Breast epithelium (tissue), 4 donors: ENCODE measurements at regions of chr7 and their contacts with region 1.

Region 1: DNA sequence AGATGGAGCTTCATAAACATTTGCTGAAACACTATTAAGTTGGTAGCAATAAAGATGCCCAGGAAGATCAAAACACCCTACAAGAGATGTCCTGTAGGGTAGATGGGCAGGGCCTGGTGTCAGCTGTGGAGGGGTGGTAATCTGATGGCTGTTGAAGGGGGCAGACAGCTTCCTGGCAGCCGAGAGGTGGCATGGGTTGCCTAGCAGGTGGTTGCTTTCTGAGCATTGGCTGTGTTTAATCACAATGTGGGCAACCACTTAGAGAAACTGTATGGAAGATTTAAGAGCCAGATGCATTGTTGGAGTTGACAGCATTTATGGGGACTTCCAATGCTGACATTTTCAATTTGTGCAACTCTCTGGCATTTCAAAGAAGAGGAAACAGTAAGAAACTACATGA is 79.9 kb upstream of the SLC26A5 start:
- DNase-seq: no peak
- H3K4me3 ChIP-seq: no peak overlapping the region
- H3K27ac ChIP-seq: no peak overlapping the region
- H3K4me1 ChIP-seq: no peaks in the 10 kb centered on the region
- H3K27me3 ChIP-seq: no peaks in the 10 kb centered on the region
- CTCF ChIP-seq: no peak
- POLR2A ChIP-seq: no peak

Region 2: DNA sequence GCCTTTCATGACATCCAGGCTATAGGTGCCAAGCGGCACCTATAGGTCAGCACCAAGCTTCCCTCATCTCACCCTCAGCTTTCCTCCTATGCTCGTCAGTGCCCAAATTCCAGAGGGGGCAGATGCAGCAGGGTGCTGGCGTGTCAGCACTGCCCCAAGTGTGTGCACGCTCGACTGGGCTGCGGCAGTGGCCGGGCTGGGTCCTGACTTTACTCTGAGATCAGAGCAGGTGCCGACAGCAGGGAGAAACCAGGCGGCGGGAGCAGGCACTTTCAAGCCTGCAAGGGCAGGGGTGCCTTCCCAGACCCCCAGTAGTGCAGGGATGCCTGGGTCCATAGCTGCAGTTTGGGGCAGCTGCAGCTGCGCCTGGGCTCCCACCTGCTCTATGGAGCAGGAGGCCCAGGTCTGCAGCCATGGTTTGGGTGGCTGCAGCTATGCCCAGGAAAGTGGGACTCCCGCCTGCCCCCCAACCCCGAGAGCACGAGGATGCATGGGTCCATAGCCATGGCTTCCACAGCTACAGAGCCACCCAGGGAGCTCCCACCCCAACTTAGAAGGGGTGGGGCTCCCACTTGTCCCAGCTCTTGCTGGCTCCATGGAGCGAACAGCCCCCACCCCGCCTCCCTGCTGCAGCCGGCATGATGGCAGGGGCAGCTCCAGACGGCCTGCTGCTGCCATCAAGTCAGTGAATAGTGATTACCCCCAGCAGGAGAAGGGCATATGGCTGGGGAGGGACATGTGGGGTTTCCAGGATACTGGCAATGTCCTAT is 1288.9 kb after region 1 on chr7:
- intact Hi-C with region 1: loop called (anchors 5 kb)
- DNase-seq: no peak
- H3K4me3 ChIP-seq: no peak overlapping the region
- H3K27ac ChIP-seq: no peak overlapping the region
- H3K4me1 ChIP-seq: no peaks in the 10 kb centered on the region
- H3K27me3 ChIP-seq: peaks cover 0 to 5% of the 10 kb centered on the region in 2 donors
- CTCF ChIP-seq: no peak
- POLR2A ChIP-seq: no peak

Region 3: DNA sequence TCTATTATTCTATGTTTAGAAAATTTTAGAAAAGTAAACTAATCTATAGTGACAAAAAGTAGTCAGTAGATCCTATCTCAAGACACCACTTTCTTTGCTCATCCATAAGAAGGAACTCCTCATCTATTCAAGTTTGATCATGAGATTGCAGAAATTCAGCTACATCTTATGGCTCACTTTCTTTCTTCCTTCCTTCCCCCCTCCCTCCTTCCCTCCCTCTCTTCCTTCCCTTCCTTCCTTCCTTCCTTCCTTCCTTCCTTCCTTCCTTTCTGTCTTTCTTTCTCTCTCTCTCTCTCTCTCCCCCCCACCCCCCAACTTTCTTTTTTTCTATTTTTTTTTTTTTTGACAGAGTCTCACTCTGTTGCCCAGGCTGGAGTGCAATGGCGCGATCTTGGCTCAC is 1898.0 kb after region 1 on chr7:
- intact Hi-C with region 1: no loop called
- DNase-seq: no peak
- H3K4me3 ChIP-seq: no peak overlapping the region
- H3K27ac ChIP-seq: no peak overlapping the region
- H3K4me1 ChIP-seq: no peaks in the 10 kb centered on the region
- H3K27me3 ChIP-seq: no peaks in the 10 kb centered on the region
- CTCF ChIP-seq: no peak
- POLR2A ChIP-seq: no peak